Cardiac septum (tissue), 1 donor: ENCODE measurements at regions of chr9 and their contacts with region 1.

Region 1: GRCh38 chr9:87336914-87337333 is 160.7 kb upstream of the DAPK1 start:
- DNase-seq: no peak

Region 2: GRCh38 chr9:87656485-87656884 is 319.6 kb after region 1 on chr9:
- intact Hi-C with region 1: loop called (anchors 2 kb)
- DNase-seq: no peak

Region 3: DNA sequence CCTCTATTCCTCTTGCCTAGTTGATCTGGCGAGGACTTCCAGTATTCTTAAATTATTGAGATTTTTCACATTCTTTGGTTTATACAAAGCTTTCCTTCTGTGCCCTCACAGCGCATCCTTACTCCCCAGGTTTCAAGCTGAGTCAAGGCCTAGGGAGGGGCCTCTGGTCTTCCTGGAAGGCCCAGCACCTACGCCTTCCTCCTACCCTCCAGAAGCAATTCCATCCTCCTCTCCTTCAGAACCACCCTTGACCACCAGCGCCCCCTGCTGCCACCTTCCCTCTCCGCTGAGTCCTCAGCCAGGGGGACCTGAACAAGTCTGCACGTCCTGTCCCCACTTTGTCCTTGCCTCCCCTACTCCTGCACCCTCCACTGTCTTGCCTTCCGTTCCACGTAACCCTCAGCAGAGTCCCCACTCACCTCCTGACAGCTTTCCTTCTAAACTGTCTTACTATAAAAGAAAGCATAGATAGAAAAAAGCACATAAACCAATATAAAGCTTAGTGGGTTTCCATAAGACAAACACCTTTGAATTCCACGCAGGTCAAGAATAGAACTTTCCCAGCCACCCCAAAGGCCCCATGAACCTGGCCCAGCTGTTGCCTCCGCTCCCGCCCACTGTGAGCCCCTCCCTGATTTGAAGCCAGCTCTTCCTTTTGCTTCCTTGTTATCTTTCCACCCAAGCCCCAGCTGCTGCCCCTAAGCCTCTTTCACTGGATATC is 326.0 kb after region 1 on chr9:
- intact Hi-C with region 1: loop called (anchors 1 kb)
- DNase-seq: peak; percentile 86

Region 4: DNA sequence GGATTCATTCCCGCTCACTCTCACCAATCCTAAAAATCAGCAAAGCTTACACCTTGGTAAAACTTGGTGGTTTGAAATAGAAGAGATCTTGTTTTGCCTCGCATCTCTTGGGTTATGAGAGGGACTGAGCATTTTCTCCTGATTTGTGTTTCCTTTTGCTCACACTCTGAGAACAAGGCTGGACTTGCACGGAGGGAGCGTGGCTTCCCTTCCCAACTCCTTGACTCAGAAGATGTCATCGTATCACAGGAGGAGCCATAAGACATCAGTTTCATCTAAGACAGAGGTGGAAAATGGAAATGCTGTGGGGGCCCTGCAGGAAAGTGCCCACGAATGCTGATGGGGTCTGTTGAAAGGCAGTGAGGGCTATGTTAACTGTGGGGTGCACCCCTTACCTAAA is 426.4 kb after region 1 on chr9:
- intact Hi-C with region 1: no loop called
- DNase-seq: no peak